Activated CD4-positive, alpha-beta memory T cell treated with anti-CD3 and anti-CD28 coated beads, Interleukin-2, amount 10 ng/mL, durations not matched to agents 7 days and 5 days (primary cell): ENCODE measurements at regions of chr5 and their contacts with region 1.

Region 1: GRCh38 chr5:140718241-140718580 is 18.0 kb downstream of the ZMAT2 start:
- DNase-seq: no peak
- H3K4me3 Mint-ChIP-seq: no peak overlapping the region
- H3K27ac Mint-ChIP-seq: no peak overlapping the region
- H3K4me1 Mint-ChIP-seq: peaks cover 15% of the 10 kb centered on the region
- H3K27me3 Mint-ChIP-seq: peaks cover 11% of the 10 kb centered on the region

Region 2: DNA sequence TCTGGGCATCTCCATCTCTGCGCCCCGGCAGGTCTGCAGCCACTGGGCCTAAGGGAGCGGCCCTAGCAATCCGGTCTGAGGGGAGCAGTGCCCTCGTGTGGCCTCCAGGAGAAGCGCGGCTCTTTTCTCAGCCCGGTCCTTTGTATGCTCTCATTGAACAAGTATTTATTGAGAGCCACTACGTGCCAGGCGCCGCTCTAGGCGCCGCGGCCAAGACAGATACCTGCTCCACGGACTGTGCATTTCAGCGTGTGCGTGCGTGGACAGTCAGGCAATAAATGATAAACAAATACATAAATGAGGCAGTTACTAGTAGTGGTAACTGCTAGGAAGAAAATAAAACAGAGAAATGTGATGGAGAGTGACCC is 360.5 kb before region 1 on chr5:
- CTCF ChIA-PET with region 1: interaction called, 34 read pairs
- POLR2A ChIA-PET with region 1: interaction called, 3 read pairs
- DNase-seq: peak; percentile 87
- H3K4me3 Mint-ChIP-seq: peak overlapping the region; percentile 71
- H3K27ac Mint-ChIP-seq: peak overlapping the region; percentile 61
- H3K4me1 Mint-ChIP-seq: peaks cover 25% of the 10 kb centered on the region
- H3K27me3 Mint-ChIP-seq: peaks cover 5% of the 10 kb centered on the region

Region 3: GRCh38 chr5:140362860-140363630 is 355.2 kb before region 1 on chr5:
- CTCF ChIA-PET with region 1: interaction called, 34 read pairs
- POLR2A ChIA-PET with region 1: interaction called, 3 read pairs
- DNase-seq: peak; percentile 87
- H3K4me3 Mint-ChIP-seq: peak overlapping the region; percentile 71
- H3K27ac Mint-ChIP-seq: no peak overlapping the region
- H3K4me1 Mint-ChIP-seq: peaks cover 12% of the 10 kb centered on the region
- H3K27me3 Mint-ChIP-seq: peaks cover 3% of the 10 kb centered on the region